Heart left ventricle (tissue), 16 donors: ENCODE measurements at regions of chr5 and their contacts with region 1.

Region 1: GRCh38 chr5:178527458-178528307 is 62.5 kb downstream of the COL23A1 start:
- DNase-seq: peak; percentile 44 to 91 (median 74)
- ATAC-seq: peak; percentile 91 to 97 (median 94)
- H3K4me3 ChIP-seq: no peak overlapping the region
- H3K27ac ChIP-seq: peak overlapping the region; percentile 34 to 90 (median 72)
- H3K4me1 ChIP-seq: peaks cover 0 to 25% (median 3%) of the 10 kb centered on the region in 12 donors
- H3K27me3 ChIP-seq: no peaks in the 10 kb centered on the region
- CTCF ChIP-seq: no peak
- POLR2A ChIP-seq: no peak

Region 2: GRCh38 chr5:178461004-178461730 is 66.5 kb before region 1 on chr5:
- intact Hi-C with region 1: loop called in 1 of 10 experiments (anchors 1 kb)
- DNase-seq: peak; percentile 81 to 89 (median 86)
- ATAC-seq: peak; percentile 94 to 98 (median 95)
- H3K4me3 ChIP-seq: peak overlapping the region in 2 of 12 donors; percentile 13 to 32
- H3K27ac ChIP-seq: peak overlapping the region; percentile 34 to 87 (median 70)
- H3K4me1 ChIP-seq: peaks cover 0 to 19% (median 7%) of the 10 kb centered on the region in 12 donors
- H3K27me3 ChIP-seq: no peaks in the 10 kb centered on the region
- CTCF ChIP-seq: peak; percentile 73 to 93 (median 84)
- POLR2A ChIP-seq: no peak

Region 3: DNA sequence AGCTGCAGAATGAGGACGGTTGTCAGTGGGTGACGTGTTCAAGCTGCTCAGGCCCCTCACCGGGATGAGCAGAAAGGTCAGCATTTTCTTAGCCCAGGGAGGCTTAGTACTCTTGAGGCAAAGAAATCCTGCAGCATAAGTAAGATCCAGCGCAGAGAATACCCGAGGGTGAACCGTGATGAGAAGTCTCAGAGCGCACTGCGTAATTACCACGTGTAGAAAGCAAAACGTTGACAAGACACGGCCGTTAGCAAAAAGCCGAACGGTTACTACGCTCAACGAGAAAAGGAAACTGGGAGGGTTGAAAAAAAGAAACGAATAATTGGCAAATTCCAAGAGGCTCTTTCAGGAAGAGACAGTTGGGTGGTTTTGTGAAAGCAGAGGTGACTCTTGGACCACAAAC is 41.4 kb before region 1 on chr5:
- intact Hi-C with region 1: loop called in 1 of 10 experiments (anchors 5 kb)
- DNase-seq: no peak
- ATAC-seq: no peak
- H3K4me3 ChIP-seq: peak overlapping the region in 2 of 12 donors; percentile 4 to 19
- H3K27ac ChIP-seq: no peak overlapping the region
- H3K4me1 ChIP-seq: peaks cover 0 to 16% (median 0%) of the 10 kb centered on the region in 12 donors
- H3K27me3 ChIP-seq: no peaks in the 10 kb centered on the region
- CTCF ChIP-seq: no peak
- POLR2A ChIP-seq: no peak

Region 4: GRCh38 chr5:178542455-178542854 is 14.8 kb after region 1 on chr5:
- intact Hi-C with region 1: loop called in 1 of 10 experiments (anchors 1 kb)
- DNase-seq: peak in 3 of 5 donors; percentile 42 to 58 (median 48)
- ATAC-seq: peak; percentile 12 to 38 (median 31)
- H3K4me3 ChIP-seq: no peak overlapping the region
- H3K27ac ChIP-seq: peak overlapping the region; percentile 59 to 97 (median 91)
- H3K4me1 ChIP-seq: peaks cover 0 to 49% (median 26%) of the 10 kb centered on the region in 12 donors
- H3K27me3 ChIP-seq: no peaks in the 10 kb centered on the region
- CTCF ChIP-seq: no peak
- POLR2A ChIP-seq: no peak